CD4-positive, alpha-beta T cell (primary cell): ENCODE measurements at regions of chr19 and their contacts with region 1.

Region 1: DNA sequence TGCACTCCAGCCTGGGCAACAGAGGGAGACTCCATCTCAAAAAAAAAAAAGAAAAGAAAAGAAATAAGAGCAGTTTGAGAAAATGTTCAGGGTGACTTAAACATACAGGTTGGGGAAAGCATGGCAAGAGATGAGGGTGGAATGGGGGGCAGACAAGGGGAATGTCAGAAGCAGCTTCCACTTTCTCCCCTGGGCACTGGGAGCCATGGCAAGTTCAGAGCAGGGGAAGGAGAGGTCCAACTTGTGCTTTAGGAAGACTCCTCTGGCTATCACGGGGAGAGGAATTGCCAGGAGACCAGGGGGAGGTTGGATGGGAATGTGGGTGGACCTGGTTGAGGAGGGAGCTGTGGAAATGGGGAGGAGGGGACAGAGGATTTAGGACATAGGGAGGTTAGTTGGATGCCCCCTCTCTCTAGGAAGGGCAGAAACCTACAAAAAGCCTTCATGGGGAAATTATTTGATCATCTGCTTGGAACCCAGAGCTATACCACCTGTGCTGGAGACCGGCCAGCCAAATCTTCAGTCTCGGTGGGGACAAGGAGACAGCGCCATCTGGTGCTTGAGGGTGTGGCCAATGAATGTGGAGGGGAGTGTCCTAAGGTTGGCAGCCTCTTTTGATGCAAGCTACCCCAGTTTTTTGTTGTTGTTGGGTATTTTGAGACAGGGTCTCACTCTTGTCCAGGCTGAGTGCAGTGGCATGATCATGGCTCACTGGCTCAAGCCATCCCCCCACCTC is 7.3 kb upstream of the STRN4 start:
- DNase-seq: peak; percentile 51 to 84 (median 69)
- ATAC-seq: peak; percentile 95
- H3K4me3 ChIP-seq: no peak overlapping the region
- H3K4me3 Mint-ChIP-seq: peak overlapping the region; percentile 65
- H3K27ac ChIP-seq: no peak overlapping the region
- H3K27ac Mint-ChIP-seq: no peak overlapping the region
- H3K4me1 ChIP-seq: peaks cover 17% of the 10 kb centered on the region
- H3K4me1 Mint-ChIP-seq: peaks cover 13% of the 10 kb centered on the region
- H3K27me3 ChIP-seq: no peaks in the 10 kb centered on the region
- H3K27me3 Mint-ChIP-seq: no peaks in the 10 kb centered on the region
- CTCF ChIP-seq: peak; percentile 62

Region 2: DNA sequence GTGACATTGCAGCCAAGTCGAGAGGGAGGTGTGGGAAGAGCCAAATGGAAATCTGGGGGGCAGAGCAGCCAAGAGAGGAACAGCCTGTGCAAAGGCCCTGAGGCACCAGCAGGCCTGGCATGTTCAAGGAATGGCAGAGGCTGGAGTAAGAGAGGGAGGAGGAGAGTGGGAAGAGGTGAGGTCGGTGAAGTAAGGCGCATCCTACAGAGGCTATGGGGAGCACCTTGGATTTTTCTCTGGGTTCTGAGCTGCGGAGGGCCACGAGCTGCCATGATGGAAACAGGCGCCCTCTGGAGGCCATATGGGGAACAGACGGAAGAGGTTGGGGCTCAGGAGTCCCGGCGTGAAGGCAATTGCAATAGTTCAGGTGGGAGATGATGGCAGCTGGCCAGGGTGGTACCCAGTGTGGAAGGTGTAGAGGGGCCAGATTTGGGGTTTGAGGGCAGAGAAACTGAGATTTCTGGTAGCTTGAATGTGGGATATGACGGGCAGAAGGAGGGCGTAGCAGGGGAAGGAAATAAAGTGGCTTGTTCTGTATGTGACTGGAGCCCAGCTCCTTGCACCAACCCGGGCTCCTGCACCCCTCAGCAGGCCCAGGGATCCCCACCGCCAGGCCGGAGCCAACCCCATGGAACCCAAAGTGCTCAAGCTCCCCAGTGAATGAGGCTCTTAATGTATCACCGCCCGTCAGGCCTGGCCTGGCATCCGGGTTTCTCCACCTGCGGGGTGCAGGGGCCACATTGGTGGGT is 13.2 kb after region 1 on chr19:
- CTCF ChIA-PET with region 1: interaction called, 12 read pairs
- POLR2A ChIA-PET with region 1: no interaction called
- intact Hi-C with region 1: no loop called
- DNase-seq: peak in 11 of 14 experiments; percentile 35 to 81 (median 57)
- ATAC-seq: peak; percentile 69
- H3K4me3 ChIP-seq: no peak overlapping the region
- H3K4me3 Mint-ChIP-seq: no peak overlapping the region
- H3K27ac ChIP-seq: no peak overlapping the region
- H3K27ac Mint-ChIP-seq: no peak overlapping the region
- H3K4me1 ChIP-seq: peaks cover 6% of the 10 kb centered on the region
- H3K4me1 Mint-ChIP-seq: no peaks in the 10 kb centered on the region
- H3K27me3 ChIP-seq: no peaks in the 10 kb centered on the region
- H3K27me3 Mint-ChIP-seq: no peaks in the 10 kb centered on the region
- CTCF ChIP-seq: peak; percentile 69